BJ (cell line): ENCODE measurements at regions of chr5 and their contacts with region 1.

Region 1: GRCh38 chr5:132007399-132008165 is 3.9 kb downstream of the ACSL6 start:
- DNase-seq: no peak
- H3K4me3 ChIP-seq: no peak overlapping the region
- H3K27me3 ChIP-seq: peaks cover 29% of the 10 kb centered on the region
- CTCF ChIP-seq: peak; percentile 70

Region 2: DNA sequence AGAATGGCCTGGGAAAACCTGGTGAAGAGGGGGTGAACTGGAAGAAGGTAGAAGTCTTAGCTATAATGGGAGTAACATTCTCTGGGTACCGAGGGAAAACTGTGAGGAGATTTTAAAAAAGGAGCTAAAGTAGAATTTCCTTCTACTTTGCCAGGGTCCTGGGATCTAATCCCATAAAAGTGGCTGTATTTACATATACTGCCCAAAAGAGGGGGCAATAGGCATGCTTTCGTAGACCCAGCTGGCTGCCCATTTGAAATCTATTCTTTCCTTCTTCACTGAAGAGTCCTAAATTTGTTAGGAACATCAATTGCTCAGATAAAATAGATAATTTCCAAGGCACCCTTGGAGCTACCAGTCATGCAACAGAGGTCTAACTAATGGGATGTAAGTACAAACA is 584.5 kb before region 1 on chr5:
- CTCF ChIA-PET with region 1: interaction called, 30 read pairs
- POLR2A ChIA-PET with region 1: no interaction called
- DNase-seq: no peak
- H3K4me3 ChIP-seq: no peak overlapping the region
- H3K27me3 ChIP-seq: no peaks in the 10 kb centered on the region
- CTCF ChIP-seq: peak; percentile 49

Region 3: DNA sequence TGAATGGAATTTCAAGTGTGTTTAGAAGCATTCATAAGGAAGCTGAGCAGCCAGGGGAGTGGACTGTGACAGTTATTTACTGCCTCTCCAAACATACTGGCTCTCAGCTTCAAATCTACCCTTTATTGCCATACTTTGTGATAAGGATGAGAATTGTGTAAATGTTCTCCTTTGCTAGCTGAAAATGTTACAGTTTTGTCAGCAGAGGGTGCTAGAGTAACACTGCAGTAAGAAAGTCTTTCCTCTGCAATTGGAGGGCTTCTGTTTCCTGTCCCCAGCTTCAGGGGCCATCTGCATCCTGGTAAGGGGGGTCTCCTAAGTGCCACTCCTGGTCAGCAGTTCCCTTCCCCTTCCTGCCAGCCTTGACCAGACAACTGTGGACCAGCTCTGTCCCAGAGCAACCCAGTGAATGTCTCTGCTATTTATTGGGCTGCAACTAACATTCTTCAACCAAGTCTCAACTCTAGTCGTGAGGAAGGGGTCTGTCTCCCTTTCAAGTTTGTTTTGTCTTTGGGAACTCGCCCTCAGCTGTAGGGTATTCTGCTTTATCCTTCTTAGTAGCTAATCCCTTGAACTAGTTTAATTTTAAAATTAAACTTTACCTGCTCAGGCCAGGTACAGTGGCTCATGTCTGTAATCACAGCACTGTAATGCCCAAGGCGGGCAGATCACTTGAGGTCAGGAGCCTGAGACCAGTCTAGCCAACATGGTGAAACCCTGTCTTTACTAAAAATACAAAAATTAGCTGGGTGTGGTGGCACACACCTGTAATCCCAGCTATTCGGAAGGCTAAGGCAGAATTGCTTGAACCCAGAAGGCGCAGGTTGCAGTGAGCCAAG is 417.9 kb before region 1 on chr5:
- CTCF ChIA-PET with region 1: interaction called, 199 read pairs
- POLR2A ChIA-PET with region 1: no interaction called
- DNase-seq: no peak
- H3K4me3 ChIP-seq: no peak overlapping the region
- H3K27me3 ChIP-seq: no peaks in the 10 kb centered on the region
- CTCF ChIP-seq: peak; percentile 84

Region 4: DNA sequence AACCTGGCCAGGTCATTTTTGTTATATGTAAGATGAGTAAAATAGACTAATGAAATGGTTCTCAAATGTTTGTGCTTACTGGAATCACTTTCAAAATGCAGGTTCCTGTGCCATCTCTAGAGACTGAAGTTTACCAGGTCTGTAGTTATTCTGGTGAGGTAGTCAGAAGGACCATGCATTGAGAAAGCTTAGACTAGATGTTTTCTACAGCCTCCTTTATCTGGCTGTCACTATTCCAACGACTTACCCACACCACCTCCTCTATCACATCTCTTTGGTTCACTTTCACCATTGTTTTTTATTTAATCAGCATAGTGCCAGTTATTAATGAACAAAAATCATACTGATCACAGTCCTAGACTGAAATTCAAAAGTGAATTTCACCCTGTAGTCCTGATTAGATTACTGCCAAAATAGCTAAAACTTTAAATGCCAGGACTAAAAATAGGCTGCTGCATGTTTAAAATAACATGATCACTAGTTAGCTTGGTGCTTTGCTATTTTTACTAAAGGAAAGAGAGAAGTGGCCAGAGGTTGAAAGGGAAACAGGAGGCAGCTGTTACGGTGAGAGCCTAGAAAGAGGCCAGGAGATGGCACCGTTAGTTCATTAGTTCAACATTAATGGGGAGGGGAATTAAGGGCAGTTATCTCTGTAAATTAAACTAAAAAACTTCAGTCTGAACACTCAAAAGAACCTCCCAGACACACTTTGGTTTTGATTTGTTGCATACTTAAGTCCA is 196.9 kb before region 1 on chr5:
- CTCF ChIA-PET with region 1: interaction called, 25 read pairs
- POLR2A ChIA-PET with region 1: no interaction called
- DNase-seq: no peak
- H3K4me3 ChIP-seq: no peak overlapping the region
- H3K27me3 ChIP-seq: no peaks in the 10 kb centered on the region
- CTCF ChIP-seq: 0 out of 2 replicates have a peak, but pooled peaks have one; percentile 9